Panc1 (cell line): ENCODE measurements at regions of chr18 and their contacts with region 1.

Region 1: GRCh38 chr18:9971313-9971920 is 57.6 kb downstream of the VAPA start:
- DNase-seq: peak; percentile 48
- ATAC-seq: peak; percentile 74; the same call in 1 of the 2 replicates
- H3K4me3 ChIP-seq: no peak overlapping the region
- H3K27ac ChIP-seq: no peak overlapping the region
- H3K4me1 ChIP-seq: no peaks in the 10 kb centered on the region
- H3K27me3 ChIP-seq: no peaks in the 10 kb centered on the region
- CTCF ChIP-seq: peak; percentile 79

Region 2: GRCh38 chr18:9757748-9758621 is 213.4 kb before region 1 on chr18:
- CTCF ChIA-PET with region 1: no interaction called
- POLR2A ChIA-PET with region 1: no interaction called
- in situ Hi-C with region 1: no loop called
- intact Hi-C with region 1: no loop called
- DNase-seq: no peak
- ATAC-seq: peak; percentile 34; the same call in 1 of the 2 replicates
- H3K4me3 ChIP-seq: no peak overlapping the region
- H3K27ac ChIP-seq: peak overlapping the region; percentile 62
- H3K4me1 ChIP-seq: peaks cover 47% of the 10 kb centered on the region
- H3K27me3 ChIP-seq: no peaks in the 10 kb centered on the region
- CTCF ChIP-seq: no peak

Region 3: DNA sequence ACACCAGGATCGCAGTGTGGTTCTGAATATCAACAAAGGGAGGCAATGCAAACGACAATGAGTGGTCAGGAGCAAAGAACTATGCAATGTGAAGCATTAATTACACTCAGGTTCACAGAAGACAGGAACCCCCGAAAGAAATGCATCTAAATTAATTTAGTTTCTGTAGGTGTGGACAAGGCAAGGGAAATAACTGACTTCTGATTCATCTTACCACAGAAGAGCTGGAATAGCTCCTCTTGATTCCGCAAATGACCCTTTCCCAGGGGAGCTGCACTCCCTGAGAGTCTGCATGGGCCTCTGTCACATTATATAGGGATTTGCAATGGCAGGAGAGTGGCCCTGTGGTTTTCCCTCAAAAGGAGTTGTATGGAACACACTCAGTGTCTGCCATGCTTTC is 219.1 kb after region 1 on chr18:
- CTCF ChIA-PET with region 1: no interaction called
- POLR2A ChIA-PET with region 1: no interaction called
- in situ Hi-C with region 1: no loop called
- intact Hi-C with region 1: no loop called
- DNase-seq: no peak
- ATAC-seq: no peak
- H3K4me3 ChIP-seq: no peak overlapping the region
- H3K27ac ChIP-seq: no peak overlapping the region
- H3K4me1 ChIP-seq: no peaks in the 10 kb centered on the region
- H3K27me3 ChIP-seq: no peaks in the 10 kb centered on the region
- CTCF ChIP-seq: no peak

Region 4: GRCh38 chr18:10519999-10520935 is 548.9 kb after region 1 on chr18:
- CTCF ChIA-PET with region 1: interaction called, 4 read pairs
- POLR2A ChIA-PET with region 1: no interaction called
- in situ Hi-C with region 1: no loop called
- intact Hi-C with region 1: loop called (anchors 1 kb)
- DNase-seq: peak; percentile 33
- ATAC-seq: peak; percentile 96
- H3K4me3 ChIP-seq: no peak overlapping the region
- H3K27ac ChIP-seq: no peak overlapping the region
- H3K4me1 ChIP-seq: no peaks in the 10 kb centered on the region; the same call in 1 of the 2 replicates
- H3K27me3 ChIP-seq: peaks cover 7% of the 10 kb centered on the region
- CTCF ChIP-seq: peak; percentile 89

Region 5: GRCh38 chr18:10670856-10671255 is 699.4 kb after region 1 on chr18:
- CTCF ChIA-PET with region 1: no interaction called
- POLR2A ChIA-PET with region 1: no interaction called
- in situ Hi-C with region 1: no loop called
- intact Hi-C with region 1: no loop called
- DNase-seq: no peak
- ATAC-seq: no peak
- H3K4me3 ChIP-seq: no peak overlapping the region
- H3K27ac ChIP-seq: no peak overlapping the region
- H3K4me1 ChIP-seq: no peaks in the 10 kb centered on the region
- H3K27me3 ChIP-seq: peaks cover 3% of the 10 kb centered on the region; the same call in 1 of the 2 replicates
- CTCF ChIP-seq: no peak